Activated CD8-positive, alpha-beta T cell treated with anti-CD3 and anti-CD28 coated beads, Interleukin-2, amount 10 ng/mL, durations not matched to agents 7 days and 5 days (primary cell): ENCODE measurements at regions of chr22 and their contacts with region 1.

Region 1: GRCh38 chr22:41697126-41697775 is 2.1 kb upstream of the MEI1 start:
- DNase-seq: peak; percentile 94
- ATAC-seq: peak; percentile 82
- H3K4me3 Mint-ChIP-seq: no peak overlapping the region
- H3K27ac Mint-ChIP-seq: peak overlapping the region; percentile 78
- H3K4me1 Mint-ChIP-seq: peaks cover 12% of the 10 kb centered on the region
- H3K27me3 Mint-ChIP-seq: peaks cover 6% of the 10 kb centered on the region

Region 2: DNA sequence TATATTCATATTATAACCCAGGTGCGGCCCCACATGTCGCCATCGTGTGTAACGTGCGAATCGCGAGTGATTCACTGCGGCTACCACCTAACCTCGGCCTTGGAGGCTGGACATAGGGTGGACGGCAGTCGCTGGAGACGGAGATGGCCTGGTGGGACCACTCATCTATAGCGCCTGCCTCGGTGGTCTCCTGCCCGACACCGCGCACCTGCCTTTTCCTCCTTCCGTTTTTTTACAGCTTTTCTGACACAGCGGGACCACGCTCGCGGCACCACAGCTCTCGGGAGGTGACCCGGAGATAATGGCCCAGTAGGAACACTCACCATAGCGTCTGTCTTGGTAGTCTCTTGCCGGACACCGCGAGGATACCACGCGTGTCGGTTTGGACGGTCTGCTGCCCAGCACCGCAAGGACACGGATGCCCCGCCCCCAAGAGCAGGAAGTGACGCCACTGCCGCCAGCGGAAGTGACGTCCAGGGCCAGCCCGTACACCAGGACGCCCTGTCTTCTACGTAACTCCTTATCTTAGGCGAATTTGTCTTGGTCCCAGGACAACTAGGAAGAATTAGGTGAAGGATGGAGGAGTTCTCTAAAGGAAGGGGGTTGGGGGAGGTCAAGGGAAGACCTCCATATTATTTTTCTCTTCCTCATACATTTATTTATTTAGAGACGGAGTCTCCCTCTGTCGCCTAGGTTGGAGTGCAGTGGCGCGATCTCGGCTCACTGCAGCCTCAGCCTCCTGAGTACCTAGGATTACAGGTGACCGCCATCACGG is 15.0 kb before region 1 on chr22:
- CTCF ChIA-PET with region 1: interaction called, 50 read pairs
- POLR2A ChIA-PET with region 1: no interaction called
- DNase-seq: peak; percentile 89
- ATAC-seq: peak; percentile 89
- H3K4me3 Mint-ChIP-seq: peak overlapping the region; percentile 97
- H3K27ac Mint-ChIP-seq: peak overlapping the region; percentile 98
- H3K4me1 Mint-ChIP-seq: peaks cover 25% of the 10 kb centered on the region
- H3K27me3 Mint-ChIP-seq: no peaks in the 10 kb centered on the region

Region 3: GRCh38 chr22:41746567-41747400 is 49.5 kb after region 1 on chr22:
- CTCF ChIA-PET with region 1: interaction called, 24 read pairs
- POLR2A ChIA-PET with region 1: interaction called, 3 read pairs
- DNase-seq: peak; percentile 63
- ATAC-seq: peak; percentile 90
- H3K4me3 Mint-ChIP-seq: no peak overlapping the region
- H3K27ac Mint-ChIP-seq: no peak overlapping the region
- H3K4me1 Mint-ChIP-seq: no peaks in the 10 kb centered on the region
- H3K27me3 Mint-ChIP-seq: peaks cover 30% of the 10 kb centered on the region

Region 4: GRCh38 chr22:41808400-41808799 is 111.1 kb after region 1 on chr22:
- CTCF ChIA-PET with region 1: interaction called, 20 read pairs
- POLR2A ChIA-PET with region 1: no interaction called
- DNase-seq: no peak
- ATAC-seq: no peak
- H3K4me3 Mint-ChIP-seq: no peak overlapping the region
- H3K27ac Mint-ChIP-seq: no peak overlapping the region
- H3K4me1 Mint-ChIP-seq: peaks cover 20% of the 10 kb centered on the region
- H3K27me3 Mint-ChIP-seq: no peaks in the 10 kb centered on the region

Region 5: GRCh38 chr22:41925655-41926460 is 228.6 kb after region 1 on chr22:
- CTCF ChIA-PET with region 1: interaction called, 20 read pairs
- POLR2A ChIA-PET with region 1: no interaction called
- DNase-seq: peak; percentile 78
- ATAC-seq: peak; percentile 88
- H3K4me3 Mint-ChIP-seq: peak overlapping the region; percentile 54
- H3K27ac Mint-ChIP-seq: no peak overlapping the region
- H3K4me1 Mint-ChIP-seq: peaks cover 8% of the 10 kb centered on the region
- H3K27me3 Mint-ChIP-seq: peaks cover 10% of the 10 kb centered on the region